MCF 10A (cell line): ENCODE measurements at regions of chr19 and their contacts with region 1.

Region 1: GRCh38 chr19:1592755-1593500 is at the start of gene MBD3:
- DNase-seq: peak; percentile 94
- H3K4me3 Mint-ChIP-seq: peak within 1 kb of the TSS; percentile 83
- H3K27ac Mint-ChIP-seq: peak within 1 kb of the TSS; percentile 94
- H3K4me1 Mint-ChIP-seq: peaks cover 14% of the 10 kb centered on the region
- H3K27me3 Mint-ChIP-seq: no peaks in the 10 kb centered on the region
- CTCF ChIP-seq: no peak
- total RNA-seq, gene MBD3: 103 and 114 TPM in 2 replicates

Region 2: DNA sequence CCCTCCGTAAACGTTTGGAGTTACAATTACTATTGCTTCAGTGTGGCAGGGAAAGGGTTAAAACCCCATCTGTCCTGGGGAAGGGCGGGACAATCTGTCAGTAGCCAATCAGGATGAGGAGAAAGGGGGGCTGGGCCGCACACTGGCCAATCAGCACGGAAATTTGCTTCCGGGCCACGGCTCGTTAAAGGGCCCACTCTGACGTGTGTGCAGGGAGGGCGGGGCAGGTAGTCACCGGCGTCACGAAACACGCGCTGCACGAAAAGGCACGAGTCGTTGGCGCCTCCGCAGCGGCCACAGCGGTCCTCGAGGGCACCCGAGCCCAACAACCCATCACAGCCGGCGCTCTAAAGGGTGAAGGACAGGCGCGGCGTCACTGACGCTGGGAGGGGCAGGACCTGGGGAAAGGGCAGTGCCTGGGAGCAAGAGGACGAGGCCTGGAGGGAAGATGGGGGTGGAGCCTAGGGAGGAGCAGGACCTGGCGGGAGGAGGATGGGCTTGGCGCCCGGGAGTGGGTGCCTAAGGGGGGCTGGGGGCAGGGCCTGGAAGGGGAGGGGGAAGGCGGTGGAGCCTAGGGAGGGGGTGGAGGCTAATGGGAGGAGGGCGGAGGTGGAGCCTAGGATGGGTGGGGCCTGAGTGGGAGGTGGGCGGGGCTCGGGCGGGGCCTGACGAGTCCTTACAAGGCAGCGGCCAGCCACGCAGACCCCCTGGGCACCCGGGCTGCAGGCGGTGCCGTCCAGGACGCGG is 85.0 kb before region 1 on chr19:
- CTCF ChIA-PET with region 1: no interaction called
- POLR2A ChIA-PET with region 1: no interaction called
- intact Hi-C with region 1: no loop called
- DNase-seq: peak; percentile 97
- H3K4me3 Mint-ChIP-seq: peak overlapping the region; percentile 91
- H3K27ac Mint-ChIP-seq: peak overlapping the region; percentile 99
- H3K4me1 Mint-ChIP-seq: peaks cover 9% of the 10 kb centered on the region
- H3K27me3 Mint-ChIP-seq: no peaks in the 10 kb centered on the region
- CTCF ChIP-seq: no peak

Region 3: GRCh38 chr19:1551068-1552040 is 41.6 kb before region 1 on chr19:
- CTCF ChIA-PET with region 1: interaction called, 18 read pairs
- POLR2A ChIA-PET with region 1: interaction called, 9 read pairs
- intact Hi-C with region 1: no loop called
- DNase-seq: no peak
- H3K4me3 Mint-ChIP-seq: no peak overlapping the region
- H3K27ac Mint-ChIP-seq: no peak overlapping the region
- H3K4me1 Mint-ChIP-seq: peaks cover 2% of the 10 kb centered on the region
- H3K27me3 Mint-ChIP-seq: no peaks in the 10 kb centered on the region
- CTCF ChIP-seq: no peak

Region 4: GRCh38 chr19:1566513-1567115 is 26.3 kb before region 1 on chr19:
- CTCF ChIA-PET with region 1: interaction called, 3 read pairs
- POLR2A ChIA-PET with region 1: interaction called, 15 read pairs
- intact Hi-C with region 1: no loop called
- DNase-seq: peak; percentile 78
- H3K4me3 Mint-ChIP-seq: peak overlapping the region; percentile 65
- H3K27ac Mint-ChIP-seq: no peak overlapping the region
- H3K4me1 Mint-ChIP-seq: no peaks in the 10 kb centered on the region
- H3K27me3 Mint-ChIP-seq: peaks cover 17% of the 10 kb centered on the region
- CTCF ChIP-seq: no peak

Region 5: GRCh38 chr19:1576242-1577089 is 16.5 kb before region 1 on chr19:
- CTCF ChIA-PET with region 1: no interaction called
- POLR2A ChIA-PET with region 1: interaction called, 11 read pairs
- intact Hi-C with region 1: no loop called
- DNase-seq: no peak
- H3K4me3 Mint-ChIP-seq: no peak overlapping the region
- H3K27ac Mint-ChIP-seq: no peak overlapping the region
- H3K4me1 Mint-ChIP-seq: no peaks in the 10 kb centered on the region
- H3K27me3 Mint-ChIP-seq: no peaks in the 10 kb centered on the region
- CTCF ChIP-seq: no peak

Region 6: DNA sequence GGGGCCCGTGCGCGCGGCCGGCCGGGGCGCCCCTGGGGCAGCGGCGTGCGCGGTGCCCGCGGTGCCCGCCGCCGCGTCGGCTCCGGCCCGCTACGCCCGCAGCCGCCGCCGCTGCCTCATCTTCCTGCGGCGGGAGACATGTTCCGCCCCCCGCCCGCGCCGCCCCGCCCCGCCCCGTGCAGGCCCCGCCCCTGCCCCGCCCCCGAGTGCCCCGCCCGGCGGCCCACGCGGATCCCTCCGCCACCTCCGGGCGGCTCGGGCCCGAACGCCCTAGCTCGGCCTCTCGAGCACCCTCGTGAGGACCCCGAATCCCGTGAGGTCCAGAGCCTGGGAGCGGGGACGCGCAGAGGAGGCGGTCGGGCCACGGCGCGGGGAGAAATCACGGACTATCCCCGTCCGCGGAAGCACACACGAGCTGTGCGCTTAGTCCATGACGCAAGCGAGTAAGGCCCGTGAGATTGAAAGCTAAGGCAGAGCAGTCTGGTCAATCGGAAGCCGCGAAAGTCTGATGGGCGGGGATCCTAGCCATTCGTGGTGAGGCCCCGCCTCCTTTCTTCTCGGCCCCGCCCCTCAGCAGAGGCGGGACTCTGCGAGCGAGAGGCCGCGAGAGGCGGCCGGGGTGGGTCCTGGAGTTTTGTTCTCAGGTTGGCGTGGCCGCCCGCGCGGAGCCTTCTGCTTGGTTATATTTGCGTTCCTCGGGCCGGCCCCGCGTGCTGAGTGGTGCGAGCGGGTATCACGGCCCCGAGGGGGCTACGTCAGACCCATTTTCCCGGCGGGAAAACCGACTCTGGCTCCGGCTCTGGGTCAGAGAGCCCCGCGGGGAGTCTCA is 59.8 kb after region 1 on chr19 and contains the start of gene TCF3:
- CTCF ChIA-PET with region 1: no interaction called
- POLR2A ChIA-PET with region 1: interaction called, 22 read pairs
- intact Hi-C with region 1: no loop called
- DNase-seq: peak; percentile 99
- H3K4me3 Mint-ChIP-seq: peak within 1 kb of the TSS; percentile 75
- H3K27ac Mint-ChIP-seq: peak within 1 kb of the TSS; percentile 89
- H3K4me1 Mint-ChIP-seq: no peaks in the 10 kb centered on the region
- H3K27me3 Mint-ChIP-seq: no peaks in the 10 kb centered on the region
- CTCF ChIP-seq: no peak
- total RNA-seq, gene TCF3: 79.7 and 100 TPM in 2 replicates

Region 7: DNA sequence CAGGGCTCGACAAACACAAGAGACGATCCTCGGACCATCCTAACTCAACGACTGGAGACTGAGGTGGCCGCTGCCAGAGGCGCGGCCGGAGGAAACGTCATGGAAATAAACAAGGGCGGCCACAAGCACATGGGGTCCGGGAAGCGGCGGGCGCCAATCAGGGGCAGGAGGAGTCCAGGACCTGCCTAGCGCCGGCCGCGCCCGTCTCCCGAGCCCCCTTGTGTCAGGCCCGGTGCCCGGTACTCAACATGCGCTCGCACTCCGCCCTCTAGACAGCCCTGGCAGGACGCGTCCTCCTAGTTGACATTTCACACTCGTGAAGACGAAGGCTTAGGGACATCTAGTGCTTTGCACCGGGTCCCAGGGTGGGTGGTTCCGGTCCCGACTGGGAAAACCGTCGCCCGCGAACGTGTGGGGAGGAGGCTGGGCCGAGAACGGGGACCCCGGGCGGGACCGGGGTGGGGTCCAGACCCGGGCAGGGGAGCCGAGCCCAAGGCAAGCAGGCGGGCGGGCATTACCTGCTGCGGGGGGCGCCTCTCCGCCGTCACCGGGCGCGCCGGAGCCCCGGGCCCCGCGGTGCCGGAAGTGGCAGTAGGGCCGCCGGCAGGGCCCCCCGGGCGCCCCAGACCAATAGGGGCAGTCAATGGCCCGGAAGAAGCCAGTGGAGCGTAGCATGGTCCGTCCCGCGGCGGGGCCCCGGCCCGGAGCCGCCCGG is 254.9 kb after region 1 on chr19:
- CTCF ChIA-PET with region 1: no interaction called
- POLR2A ChIA-PET with region 1: no interaction called
- intact Hi-C with region 1: no loop called
- DNase-seq: peak; percentile 34
- H3K4me3 Mint-ChIP-seq: peak overlapping the region; percentile 84
- H3K27ac Mint-ChIP-seq: peak overlapping the region; percentile 95
- H3K4me1 Mint-ChIP-seq: peaks cover 26% of the 10 kb centered on the region
- H3K27me3 Mint-ChIP-seq: no peaks in the 10 kb centered on the region
- CTCF ChIP-seq: no peak